ENCODE measurements at regions of chr1 and their contacts with region 1.

Region 1: DNA sequence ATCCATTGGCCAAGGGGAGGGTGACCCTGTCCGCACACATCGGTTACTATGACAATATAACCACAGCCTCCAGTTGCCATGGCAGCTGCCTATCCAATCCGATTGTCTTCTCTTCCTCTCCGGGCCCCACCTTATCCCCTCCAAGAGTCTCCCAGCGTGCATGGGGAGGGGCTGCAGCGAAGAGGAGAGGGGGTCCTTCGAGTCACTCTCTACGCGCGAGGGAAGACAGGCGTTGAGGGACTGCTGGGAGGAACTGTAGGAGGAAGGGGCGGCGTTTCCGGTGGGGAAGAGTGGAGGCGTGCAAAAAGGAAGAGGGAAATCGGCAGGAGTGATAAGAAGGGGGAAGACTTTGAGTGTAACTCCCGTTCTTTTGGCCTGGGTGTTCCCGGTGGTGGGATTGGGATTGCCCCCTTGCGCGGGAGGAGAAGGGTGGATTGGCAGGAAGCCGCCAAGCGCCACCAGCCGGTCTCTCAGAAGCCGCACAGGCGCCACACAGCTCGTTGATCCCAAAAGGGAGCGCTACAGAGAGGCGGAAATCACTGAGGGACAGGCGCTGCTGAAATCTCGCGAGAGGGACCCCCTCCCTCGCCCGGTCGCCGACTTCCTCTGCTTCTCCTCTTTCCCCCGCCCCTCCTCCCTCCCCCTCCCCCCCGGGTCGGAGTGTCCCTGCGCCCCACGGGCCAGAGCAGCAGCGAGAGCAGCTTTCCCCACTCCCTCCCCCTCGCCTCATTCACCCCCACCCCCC is 384 bp upstream of the SMG7 start:
- DNase-seq: peak; percentile 99
- H3K4me3 ChIP-seq: peak overlapping the region; percentile 90 to 98 (median 94)
- H3K27ac ChIP-seq: peak overlapping the region; percentile 95 to 98 (median 96)
- H3K4me1 ChIP-seq: peaks cover 32 to 41% (median 39%) of the 10 kb centered on the region in 4 donors
- H3K27me3 ChIP-seq: no peaks in the 10 kb centered on the region
- CTCF ChIP-seq: no peak
- EP300 ChIP-seq: no peak
- POLR2A ChIP-seq: no peak

Region 2: GRCh38 chr1:183281553-183282091 is 190.3 kb before region 1 on chr1:
- intact Hi-C with region 1: loop called (anchors 5 kb)
- DNase-seq: peak; percentile 98
- H3K4me3 ChIP-seq: peak overlapping the region in 2 of 4 donors; percentile 16 to 20
- H3K27ac ChIP-seq: peak overlapping the region; percentile 56 to 77 (median 62)
- H3K4me1 ChIP-seq: peaks cover 34 to 42% (median 40%) of the 10 kb centered on the region in 4 donors
- H3K27me3 ChIP-seq: no peaks in the 10 kb centered on the region
- CTCF ChIP-seq: peak; percentile 96 to 97 (median 97)
- EP300 ChIP-seq: no peak
- POLR2A ChIP-seq: no peak

Region 3: GRCh38 chr1:183404456-183404855 is 67.5 kb before region 1 on chr1:
- intact Hi-C with region 1: no loop called
- DNase-seq: no peak
- H3K4me3 ChIP-seq: no peak overlapping the region
- H3K27ac ChIP-seq: no peak overlapping the region
- H3K4me1 ChIP-seq: no peaks in the 10 kb centered on the region
- H3K27me3 ChIP-seq: no peaks in the 10 kb centered on the region
- CTCF ChIP-seq: no peak
- EP300 ChIP-seq: no peak
- POLR2A ChIP-seq: no peak

Region 4: DNA sequence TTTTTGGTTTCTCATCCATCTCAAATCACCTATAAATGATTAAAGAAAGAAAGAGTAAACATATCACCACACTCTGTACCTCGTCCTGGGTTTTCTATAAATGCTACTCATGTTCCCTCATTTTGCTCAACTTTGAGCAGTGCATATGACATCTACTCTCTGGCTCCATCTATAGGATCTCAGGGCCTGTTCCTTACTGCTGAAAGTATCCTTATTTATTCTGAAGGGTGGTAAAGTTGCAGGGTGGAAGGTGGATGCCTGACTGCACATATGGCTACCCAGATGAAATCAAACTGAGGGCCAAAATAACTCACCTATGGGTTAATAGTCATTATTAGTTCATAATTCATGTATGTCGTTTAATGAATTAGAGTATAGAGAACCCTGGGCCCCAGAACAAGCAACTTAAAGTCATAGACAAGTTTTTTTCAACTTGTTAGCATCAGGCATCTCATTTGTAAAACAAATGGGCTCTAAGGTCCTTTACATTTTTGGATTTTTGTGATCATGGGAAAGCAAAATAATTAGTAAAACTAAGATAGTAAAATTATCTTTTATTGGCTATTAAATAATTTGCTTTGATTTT is 71.8 kb after region 1 on chr1:
- intact Hi-C with region 1: loop called (anchors 5 kb)
- DNase-seq: no peak
- H3K4me3 ChIP-seq: no peak overlapping the region
- H3K27ac ChIP-seq: no peak overlapping the region
- H3K4me1 ChIP-seq: peaks cover 0 to 7% (median 6%) of the 10 kb centered on the region in 4 donors
- H3K27me3 ChIP-seq: no peaks in the 10 kb centered on the region
- CTCF ChIP-seq: peak; percentile 52 to 72 (median 63)
- EP300 ChIP-seq: no peak
- POLR2A ChIP-seq: no peak

Region 5: GRCh38 chr1:183554577-183554976 is 82.7 kb after region 1 on chr1:
- intact Hi-C with region 1: no loop called
- DNase-seq: no peak
- H3K4me3 ChIP-seq: no peak overlapping the region
- H3K27ac ChIP-seq: no peak overlapping the region
- H3K4me1 ChIP-seq: no peaks in the 10 kb centered on the region
- H3K27me3 ChIP-seq: no peaks in the 10 kb centered on the region
- CTCF ChIP-seq: no peak
- EP300 ChIP-seq: no peak
- POLR2A ChIP-seq: no peak

Region 6: GRCh38 chr1:183635606-183636333 is 163.9 kb after region 1 on chr1 and contains the start of gene ARPC5:
- intact Hi-C with region 1: loop called (anchors 5 kb)
- DNase-seq: peak; percentile 99
- H3K4me3 ChIP-seq: peak within 1 kb of the TSS; percentile 90 to 95 (median 94)
- H3K27ac ChIP-seq: peak within 1 kb of the TSS; percentile 97 to 99 (median 98)
- H3K4me1 ChIP-seq: peaks cover 25 to 34% (median 33%) of the 10 kb centered on the region in 4 donors
- H3K27me3 ChIP-seq: no peaks in the 10 kb centered on the region
- CTCF ChIP-seq: peak in 1 of 3 experiments; percentile 31
- EP300 ChIP-seq: no peak
- POLR2A ChIP-seq: peak; percentile 90
- total RNA-seq, gene ARPC5: 80.6 to 111 (median 91.1) TPM